A549 (cell line): ENCODE measurements at regions of chr1 and their contacts with region 1.

Region 1: DNA sequence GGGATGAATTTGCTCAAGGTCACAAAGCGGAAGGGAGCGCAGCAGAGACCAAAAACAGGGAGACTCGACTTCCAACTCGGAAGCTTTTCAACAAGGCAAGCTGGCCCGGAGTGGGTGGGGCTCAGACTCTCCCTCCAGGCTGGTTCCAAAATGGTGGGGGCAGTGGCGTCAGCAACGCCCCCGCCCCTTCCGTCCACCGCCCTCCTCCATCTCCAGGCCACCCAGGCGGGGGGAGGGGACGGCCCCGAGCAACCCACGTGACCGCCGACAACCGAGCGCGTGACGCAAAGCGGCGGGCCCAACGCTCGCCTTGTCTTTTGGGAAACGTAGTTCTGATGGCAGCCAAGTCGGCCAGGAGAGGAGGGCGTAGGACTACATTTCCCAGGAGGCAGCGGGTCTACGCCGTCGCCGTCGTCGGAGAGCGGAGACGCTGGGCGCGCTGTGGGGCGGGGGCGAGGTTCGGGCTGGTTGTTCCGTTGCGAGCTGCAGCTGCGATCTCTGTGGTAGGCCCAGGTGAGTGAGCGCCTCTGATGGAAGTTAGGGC is at the start of gene THRAP3:
- DNase-seq: peak; percentile 89 to 99
- ATAC-seq: peak; percentile 96 to 97
- H3K4me3 ChIP-seq: peak within 1 kb of the TSS; percentile 65
- H3K27ac ChIP-seq: peak within 1 kb of the TSS; percentile 93 to 98
- H3K4me1 ChIP-seq: peaks cover 19% of the 10 kb centered on the region
- CTCF ChIP-seq: no peak
- EP300 ChIP-seq: no peak
- POLR2A ChIP-seq: peak; percentile 46
- RAD21 ChIP-seq: no peak; a peak in 1 of 5 replicates
- polyA plus RNA-seq, gene THRAP3: 60.7 and 66.5 TPM in 2 replicates

Region 2: GRCh38 chr1:36238433-36238832 is 14.4 kb after region 1 on chr1:
- CTCF ChIA-PET with region 1: interaction called, 7 read pairs
- POLR2A ChIA-PET with region 1: interaction called, 18 read pairs
- DNase-seq: no peak
- ATAC-seq: no peak
- H3K4me3 ChIP-seq: no peak overlapping the region
- H3K27ac ChIP-seq: no peak overlapping the region
- H3K4me1 ChIP-seq: peaks cover 19% of the 10 kb centered on the region
- CTCF ChIP-seq: no peak
- EP300 ChIP-seq: no peak
- POLR2A ChIP-seq: no peak
- RAD21 ChIP-seq: no peak